Caco-2 (cell line): ENCODE measurements at regions of chr14 and their contacts with region 1.

Region 1: DNA sequence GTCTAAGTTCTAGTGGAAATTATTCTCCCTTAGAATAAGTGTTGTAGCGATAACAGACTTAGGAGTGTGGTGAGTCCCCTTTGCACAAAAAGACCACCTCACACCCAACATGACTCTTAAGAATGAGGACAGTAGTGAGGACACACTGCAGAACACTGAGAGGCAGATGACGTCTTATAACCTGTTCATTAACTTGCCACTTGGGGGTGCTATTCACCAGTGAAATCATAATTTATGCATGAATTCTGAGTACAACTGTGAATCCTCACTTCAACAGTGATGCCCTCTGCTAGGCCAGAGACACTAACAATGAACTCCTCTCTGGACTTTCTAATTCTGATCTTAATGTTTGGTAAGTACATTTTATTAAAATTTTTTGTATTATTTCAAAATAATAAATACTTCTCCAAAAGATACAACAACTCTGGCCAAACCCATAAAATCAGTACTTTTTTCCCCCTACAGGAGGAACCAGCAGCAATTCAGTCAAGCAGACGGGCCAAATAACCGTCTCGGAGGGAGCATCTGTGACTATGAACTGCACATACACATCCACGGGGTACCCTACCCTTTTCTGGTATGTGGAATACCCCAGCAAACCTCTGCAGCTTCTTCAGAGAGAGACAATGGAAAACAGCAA is 274.7 kb downstream of the DAD1 start:
- DNase-seq: peak in 1 of 2 experiments; percentile 66
- H3K4me3 ChIP-seq: no peak overlapping the region
- H3K4me3 Mint-ChIP-seq: no peak overlapping the region
- H3K27ac Mint-ChIP-seq: peak overlapping the region; percentile 37
- H3K4me1 ChIP-seq: peaks cover 6% of the 10 kb centered on the region; the same call in 1 of the 2 replicates
- H3K4me1 Mint-ChIP-seq: peaks cover 19% of the 10 kb centered on the region
- H3K27me3 ChIP-seq: no peaks in the 10 kb centered on the region
- H3K27me3 Mint-ChIP-seq: no peaks in the 10 kb centered on the region
- CTCF ChIP-seq: peak; percentile 64 to 65

Region 2: DNA sequence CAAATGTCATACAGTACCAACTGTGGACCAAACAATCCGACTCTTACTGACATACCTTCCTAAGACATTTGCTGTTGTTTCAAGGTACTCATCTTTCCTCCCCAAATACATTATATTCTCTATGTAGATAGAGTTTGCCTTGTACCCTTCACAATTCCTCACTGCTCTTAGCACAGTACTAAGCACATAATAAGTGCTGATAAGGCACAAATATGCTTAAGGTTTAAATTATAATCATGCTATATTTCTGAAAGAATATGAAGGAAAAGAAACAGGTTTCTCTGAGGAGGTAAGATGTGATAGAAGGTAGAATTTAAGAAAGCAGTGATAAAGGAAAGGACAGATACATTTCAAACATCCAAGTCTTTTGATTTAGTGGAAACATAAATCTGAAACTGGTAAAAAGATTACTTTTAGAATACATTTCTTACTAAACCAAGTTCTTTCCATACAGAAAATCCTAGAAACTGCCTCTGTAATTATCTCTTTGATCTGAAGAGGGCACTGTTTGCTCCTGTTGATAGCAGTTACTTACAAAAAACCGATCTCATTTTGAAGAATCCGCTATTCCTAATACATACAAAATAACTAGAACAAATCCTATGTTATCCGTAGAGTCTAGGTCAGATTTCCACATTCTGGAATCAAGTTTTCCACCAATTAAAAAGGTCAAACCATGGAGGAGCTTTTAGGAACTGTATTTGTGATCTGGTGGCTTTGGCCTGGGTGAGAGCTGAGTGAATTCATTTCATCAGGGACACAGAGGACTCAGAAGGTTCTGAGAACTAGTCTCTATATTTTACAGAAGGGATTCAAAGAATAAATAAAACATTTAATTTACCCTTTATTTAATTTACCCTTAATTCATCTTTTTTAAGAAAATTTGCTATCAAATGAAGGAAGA is 37.1 kb before region 1 on chr14:
- CTCF ChIA-PET with region 1: no interaction called
- POLR2A ChIA-PET with region 1: no interaction called
- intact Hi-C with region 1: loop called (anchors 2 kb)
- DNase-seq: peak in 1 of 2 experiments; percentile 37
- H3K4me3 ChIP-seq: no peak overlapping the region
- H3K4me3 Mint-ChIP-seq: no peak overlapping the region
- H3K27ac Mint-ChIP-seq: no peak overlapping the region
- H3K4me1 ChIP-seq: peaks cover under 1% of the 10 kb centered on the region; the same call in 1 of the 2 replicates
- H3K4me1 Mint-ChIP-seq: peaks cover under 1% of the 10 kb centered on the region
- H3K27me3 ChIP-seq: no peaks in the 10 kb centered on the region
- H3K27me3 Mint-ChIP-seq: no peaks in the 10 kb centered on the region
- CTCF ChIP-seq: peak; percentile 60 to 66

Region 3: DNA sequence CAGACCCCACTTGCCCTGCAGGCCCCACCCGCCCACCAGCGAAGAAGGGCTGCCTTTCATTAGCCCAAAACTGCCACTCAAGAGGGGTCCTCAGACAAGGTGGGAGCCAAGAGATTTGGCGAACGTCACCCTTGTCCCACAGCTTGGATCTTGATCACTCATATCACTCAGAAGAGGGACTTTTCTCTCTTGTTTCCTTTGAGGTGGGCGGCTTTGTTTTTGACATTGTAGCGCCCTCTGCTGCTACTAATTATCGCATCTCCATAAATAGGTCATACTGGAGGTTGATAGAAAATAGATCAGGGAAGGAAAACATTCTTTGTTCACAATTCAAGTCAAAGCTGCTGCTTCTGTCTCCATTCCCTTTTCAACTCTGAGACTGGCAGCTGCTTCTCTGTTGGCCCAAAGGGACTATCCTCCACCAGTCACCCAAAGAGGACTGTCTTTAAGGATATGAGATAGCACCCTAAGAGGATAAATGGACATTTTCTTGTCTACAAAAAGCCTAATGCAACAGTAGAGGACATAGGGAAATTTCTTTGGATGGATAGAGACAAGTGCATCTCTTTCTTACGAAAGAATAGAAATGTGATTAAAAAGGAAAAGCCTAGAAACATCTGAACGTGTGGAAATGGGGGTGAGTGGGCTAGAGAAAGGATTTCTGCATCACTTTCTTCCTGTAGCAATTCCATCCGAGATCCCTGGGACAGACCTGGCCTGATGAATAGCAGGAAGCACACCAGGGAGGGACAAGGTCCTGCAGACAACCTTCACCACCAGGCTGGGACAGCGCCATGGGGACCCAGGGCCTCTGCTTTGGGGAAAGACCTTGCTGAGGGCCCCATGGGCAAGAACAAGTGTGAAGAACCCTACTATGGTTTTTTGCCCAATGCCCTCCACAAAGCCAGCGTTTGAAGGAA is 158.9 kb after region 1 on chr14:
- CTCF ChIA-PET with region 1: interaction called, 9 read pairs
- POLR2A ChIA-PET with region 1: no interaction called
- intact Hi-C with region 1: loop called (anchors 2 kb)
- DNase-seq: peak; percentile 39 to 55
- H3K4me3 ChIP-seq: no peak overlapping the region
- H3K4me3 Mint-ChIP-seq: no peak overlapping the region
- H3K27ac Mint-ChIP-seq: no peak overlapping the region
- H3K4me1 ChIP-seq: peaks cover 4% of the 10 kb centered on the region; the same call in 1 of the 2 replicates
- H3K4me1 Mint-ChIP-seq: peaks cover 13% of the 10 kb centered on the region
- H3K27me3 ChIP-seq: no peaks in the 10 kb centered on the region
- H3K27me3 Mint-ChIP-seq: no peaks in the 10 kb centered on the region
- CTCF ChIP-seq: peak; percentile 60 to 66